ENCODE measurements at regions of chr1 and their contacts with region 1.

Region 1: DNA sequence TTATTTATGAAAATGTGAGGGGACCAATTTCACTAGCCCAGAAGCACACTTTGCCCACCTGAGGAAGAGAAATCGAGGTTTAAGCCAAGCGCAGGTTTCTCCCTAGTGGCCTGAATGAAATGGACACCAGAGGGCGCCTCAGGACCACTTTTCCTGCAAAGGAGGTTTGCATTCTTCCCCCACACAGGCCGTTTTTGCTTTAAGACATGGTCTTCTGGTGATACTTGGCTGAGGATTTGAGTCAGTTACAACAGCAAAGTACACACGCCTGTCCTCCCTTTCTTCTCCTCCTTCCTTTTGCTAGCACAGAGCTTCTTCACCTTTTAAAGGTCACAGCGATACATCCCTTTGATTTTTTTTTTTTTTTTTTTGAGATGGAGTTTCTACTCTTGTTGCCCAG is 5.4 kb downstream of the PLA2G2E start:
- DNase-seq: no peak
- H3K4me3 ChIP-seq: no peak overlapping the region
- H3K27me3 ChIP-seq: no peaks in the 10 kb centered on the region
- CTCF ChIP-seq: peak; percentile 88

Region 2: GRCh38 chr1:19974822-19975416 is 56.9 kb after region 1 on chr1:
- CTCF ChIA-PET with region 1: interaction called, 10 read pairs
- POLR2A ChIA-PET with region 1: no interaction called
- DNase-seq: peak; percentile 8
- H3K4me3 ChIP-seq: no peak overlapping the region
- H3K27me3 ChIP-seq: no peaks in the 10 kb centered on the region; the same call in 1 of the 2 replicates
- CTCF ChIP-seq: peak; percentile 90

Region 3: DNA sequence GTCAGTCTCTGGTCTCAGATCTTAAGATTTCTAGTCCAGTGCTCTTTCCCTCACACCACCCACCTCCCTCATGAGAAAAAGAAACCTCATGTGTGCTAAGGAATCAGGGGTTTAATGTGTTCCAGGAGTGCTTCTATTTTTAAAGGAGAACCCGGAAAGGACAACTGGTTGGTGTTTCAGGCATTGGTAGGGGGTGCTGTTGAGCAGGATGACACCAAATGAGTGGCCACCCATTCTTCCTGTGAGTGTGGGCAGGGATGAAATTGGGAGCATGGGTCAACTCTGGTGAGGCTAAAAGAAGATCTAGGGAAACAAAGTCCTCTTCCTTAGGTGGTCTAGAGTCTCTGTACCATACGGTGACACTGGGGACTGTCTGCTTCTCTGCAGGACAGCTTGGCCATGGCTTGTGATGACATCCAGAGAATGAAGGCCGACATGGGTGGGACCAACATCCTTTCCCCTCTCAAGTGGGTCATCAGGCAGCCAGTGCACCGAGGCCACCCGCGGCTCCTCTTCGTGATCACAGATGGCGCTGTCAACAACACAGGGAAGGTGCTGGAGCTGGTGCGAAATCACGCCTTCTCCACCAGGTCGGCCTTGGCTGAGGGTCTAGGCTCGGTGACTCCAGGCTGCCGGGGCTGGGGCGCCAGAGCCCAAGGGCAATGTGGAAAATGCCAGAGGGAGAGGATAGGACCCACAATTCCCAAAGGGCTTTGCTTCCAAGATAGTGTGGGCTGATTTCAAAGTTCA is 411.9 kb after region 1 on chr1:
- CTCF ChIA-PET with region 1: no interaction called
- POLR2A ChIA-PET with region 1: interaction called, 10 read pairs
- DNase-seq: no peak
- H3K4me3 ChIP-seq: no peak overlapping the region
- H3K27me3 ChIP-seq: no peaks in the 10 kb centered on the region; the same call in 1 of the 2 replicates
- CTCF ChIP-seq: 0 out of 2 replicates have a peak, but pooled peaks have one; percentile 17